Dendritic cell treated with granulocyte-macrophage colony-stimulating factor and Interleukin-4, amounts not matched to agents 40 ng/mL and 50 ng/mL, for 4 days (primary cell): ENCODE measurements at regions of chr3 and their contacts with region 1.

Region 1: GRCh38 chr3:57673156-57673555 is 19.7 kb downstream of the DENND6A start:
- H3K4me3 Mint-ChIP-seq: no peak overlapping the region
- H3K27ac Mint-ChIP-seq: peak overlapping the region; percentile 76
- H3K4me1 Mint-ChIP-seq: peaks cover 46% of the 10 kb centered on the region
- H3K27me3 Mint-ChIP-seq: no peaks in the 10 kb centered on the region

Region 2: DNA sequence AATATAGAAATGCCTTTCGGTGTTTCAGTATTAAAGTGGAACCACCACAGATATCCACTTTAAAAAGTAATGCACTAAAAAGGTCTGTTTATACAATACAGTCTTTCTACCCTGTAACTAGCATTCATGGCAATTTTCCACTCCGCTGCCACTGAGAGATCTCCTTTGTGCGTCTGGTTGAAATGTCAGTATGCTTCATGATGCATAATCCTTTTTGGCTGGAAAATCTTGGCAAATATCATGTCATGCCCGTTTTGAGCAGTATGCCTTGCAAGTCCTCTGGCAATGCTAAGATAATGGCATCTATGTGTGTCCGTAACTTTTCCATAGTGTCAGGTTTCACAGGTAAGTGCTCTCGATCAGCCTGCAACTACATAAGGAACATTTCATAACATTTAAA is 45.2 kb before region 1 on chr3:
- intact Hi-C with region 1: no loop called
- H3K4me3 Mint-ChIP-seq: no peak overlapping the region
- H3K27ac Mint-ChIP-seq: no peak overlapping the region
- H3K4me1 Mint-ChIP-seq: no peaks in the 10 kb centered on the region
- H3K27me3 Mint-ChIP-seq: no peaks in the 10 kb centered on the region

Region 3: DNA sequence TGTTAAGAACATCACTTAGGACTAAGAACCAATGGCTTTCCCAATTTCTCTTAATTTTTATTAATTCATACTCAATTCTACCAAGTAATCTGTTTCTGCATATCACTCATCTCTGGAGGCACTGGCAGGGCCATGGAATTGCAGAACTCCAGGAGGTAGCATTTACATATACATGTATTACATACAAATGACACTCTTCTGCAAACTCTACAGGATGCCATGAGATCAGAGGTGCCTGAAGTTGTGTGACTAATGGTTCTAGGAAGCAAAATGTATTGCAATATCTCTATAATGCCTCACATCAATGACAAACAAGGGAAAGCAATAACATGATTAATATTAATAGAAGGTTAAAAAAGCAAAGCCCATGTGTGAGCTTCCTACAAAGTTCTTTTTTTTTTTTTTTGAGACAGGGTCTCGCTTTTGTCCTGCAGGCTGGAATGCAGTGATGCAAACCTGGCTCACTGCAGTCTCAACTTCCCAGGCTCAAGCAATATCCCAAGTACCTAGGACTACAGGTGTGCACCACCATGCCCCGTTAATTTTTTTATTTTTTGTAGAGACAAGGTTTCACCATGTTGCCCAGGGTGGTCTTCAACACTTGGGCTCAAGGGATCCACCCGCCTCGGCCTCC is 13.2 kb before region 1 on chr3:
- intact Hi-C with region 1: no loop called
- H3K4me3 Mint-ChIP-seq: no peak overlapping the region
- H3K27ac Mint-ChIP-seq: no peak overlapping the region
- H3K4me1 Mint-ChIP-seq: no peaks in the 10 kb centered on the region
- H3K27me3 Mint-ChIP-seq: no peaks in the 10 kb centered on the region

Region 4: DNA sequence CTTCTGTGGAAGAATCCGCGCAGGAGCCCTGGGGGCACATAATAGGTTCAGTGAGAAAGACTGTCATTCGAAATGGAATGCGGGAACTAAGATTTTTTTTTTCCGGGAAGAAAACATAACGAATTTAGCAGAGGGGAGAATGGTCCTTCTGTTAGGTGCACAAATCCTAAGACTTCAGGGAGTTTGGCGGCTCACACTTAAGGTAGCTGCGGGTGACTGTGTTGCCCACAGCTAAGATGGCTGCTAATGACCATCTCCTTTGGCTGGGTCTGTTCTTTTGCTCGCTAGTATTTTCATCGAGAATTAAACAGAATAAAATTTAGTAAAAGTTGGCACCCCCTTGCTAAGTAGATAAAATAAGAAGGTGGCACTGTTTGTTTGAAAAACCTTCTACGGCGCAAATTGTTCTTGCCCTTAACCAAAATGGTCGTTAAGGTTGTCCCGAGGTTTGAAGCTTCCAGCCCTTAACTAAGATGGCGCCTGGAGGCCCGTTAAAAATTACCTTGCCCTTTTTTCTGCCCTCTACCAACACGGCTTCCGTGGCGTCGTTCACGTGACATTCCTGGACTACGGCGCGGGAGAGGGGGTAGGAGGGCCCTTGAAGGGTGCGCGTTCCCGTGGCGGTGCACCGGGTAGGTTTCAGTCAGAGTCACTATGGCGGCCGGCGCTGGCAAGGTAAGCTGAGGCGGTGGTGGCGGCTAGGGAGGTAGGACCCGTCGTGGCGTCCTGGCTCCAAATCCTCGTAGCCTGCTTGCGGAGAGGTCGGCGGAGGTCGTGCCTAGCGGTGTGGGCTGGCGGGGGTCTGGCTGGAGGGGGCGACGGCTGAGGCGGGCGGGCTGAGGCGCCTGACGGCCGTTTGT is 82.7 kb after region 1 on chr3 and contains the start of gene SLMAP:
- intact Hi-C with region 1: loop called (anchors 5 kb)
- H3K4me3 Mint-ChIP-seq: peak within 1 kb of the TSS; percentile 95
- H3K27ac Mint-ChIP-seq: peak within 1 kb of the TSS; percentile 89
- H3K4me1 Mint-ChIP-seq: peaks cover 33% of the 10 kb centered on the region
- H3K27me3 Mint-ChIP-seq: no peaks in the 10 kb centered on the region